Esophagus squamous epithelium (tissue), 5 donors: ENCODE measurements at regions of chr5 and their contacts with region 1.

Region 1: DNA sequence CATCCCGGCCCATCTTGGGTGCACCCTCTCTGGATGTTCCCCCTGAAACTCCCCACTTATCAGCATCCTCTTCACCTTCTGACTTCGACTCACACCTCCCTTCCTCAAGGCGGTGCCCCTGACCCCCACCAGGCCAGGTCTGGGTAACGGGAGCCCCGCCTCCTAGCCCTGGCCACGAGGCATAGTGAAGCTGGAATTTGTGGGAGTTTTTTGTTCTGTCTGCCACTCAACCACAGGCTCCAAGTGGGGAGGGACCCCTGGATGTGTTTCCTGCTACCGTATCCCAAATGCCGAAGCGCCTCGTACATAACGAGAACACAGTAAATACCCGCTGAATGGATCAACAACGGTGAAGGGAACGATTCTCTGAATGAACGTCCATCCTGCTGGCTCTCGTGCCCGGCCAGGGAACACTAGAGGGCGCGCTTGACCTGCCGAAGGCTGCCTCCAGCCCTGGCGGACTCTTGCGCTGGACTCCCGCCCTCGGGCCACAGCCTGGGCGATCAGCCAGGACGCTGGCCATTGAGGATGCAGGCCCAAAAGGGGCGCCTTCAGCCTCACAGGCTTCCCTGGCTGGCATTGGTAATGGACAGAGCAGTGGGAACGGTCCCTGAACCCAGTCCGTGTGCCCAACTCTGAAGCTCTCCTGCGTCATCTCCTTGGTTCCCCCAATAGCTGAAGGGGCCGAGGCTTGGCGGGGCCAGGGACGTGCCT is 47.3 kb upstream of the PHYKPL start:
- DNase-seq: peak; percentile 24
- H3K4me3 ChIP-seq: no peak overlapping the region
- H3K27ac ChIP-seq: no peak overlapping the region
- H3K4me1 ChIP-seq: peaks cover 0 to 12% (median 7%) of the 10 kb centered on the region in 3 donors
- H3K27me3 ChIP-seq: peaks cover 0 to 94% (median 0%) of the 10 kb centered on the region in 4 donors
- CTCF ChIP-seq: peak; percentile 64 to 87 (median 82)
- POLR2A ChIP-seq: no peak

Region 2: GRCh38 chr5:178551059-178551458 is 271.2 kb after region 1 on chr5:
- intact Hi-C with region 1: loop called (anchors 10 kb)
- DNase-seq: no peak
- H3K4me3 ChIP-seq: no peak overlapping the region
- H3K27ac ChIP-seq: no peak overlapping the region
- H3K4me1 ChIP-seq: no peaks in the 10 kb centered on the region
- H3K27me3 ChIP-seq: peaks cover 0 to 25% (median 0%) of the 10 kb centered on the region in 4 donors
- CTCF ChIP-seq: peak in 4 of 6 experiments; percentile 14 to 53 (median 42)
- POLR2A ChIP-seq: no peak

Region 3: GRCh38 chr5:178589180-178590140 is 309.6 kb after region 1 on chr5:
- intact Hi-C with region 1: loop called (anchors 10 kb)
- DNase-seq: no peak
- H3K4me3 ChIP-seq: peak overlapping the region; percentile 39 to 70 (median 48)
- H3K27ac ChIP-seq: peak overlapping the region in 2 of 4 donors; percentile 6 to 18
- H3K4me1 ChIP-seq: peaks cover 14 to 35% (median 20%) of the 10 kb centered on the region in 3 donors
- H3K27me3 ChIP-seq: peaks cover 0 to 48% (median 2%) of the 10 kb centered on the region in 4 donors
- CTCF ChIP-seq: peak in 3 of 6 experiments; percentile 12 to 42 (median 17)
- POLR2A ChIP-seq: no peak

Region 4: GRCh38 chr5:178602752-178603151 is 322.9 kb after region 1 on chr5:
- intact Hi-C with region 1: no loop called
- DNase-seq: no peak
- H3K4me3 ChIP-seq: no peak overlapping the region
- H3K27ac ChIP-seq: no peak overlapping the region
- H3K4me1 ChIP-seq: no peaks in the 10 kb centered on the region
- H3K27me3 ChIP-seq: no peaks in the 10 kb centered on the region
- CTCF ChIP-seq: no peak
- POLR2A ChIP-seq: no peak